Activated CD8-positive, alpha-beta T cell treated with anti-CD3 and anti-CD28 coated beads, Interleukin-2, amount 10 ng/mL, durations not matched to agents 7 days and 5 days (primary cell): ENCODE measurements at regions of chr4 and their contacts with region 1.

Region 1: GRCh38 chr4:22676068-22676467 is 16.7 kb upstream of the GBA3 start:
- DNase-seq: no peak
- ATAC-seq: no peak
- H3K4me3 Mint-ChIP-seq: no peak overlapping the region
- H3K27ac Mint-ChIP-seq: no peak overlapping the region
- H3K4me1 Mint-ChIP-seq: peaks cover 34% of the 10 kb centered on the region
- H3K27me3 Mint-ChIP-seq: no peaks in the 10 kb centered on the region

Region 2: GRCh38 chr4:22515145-22515887 is 160.8 kb before region 1 on chr4:
- CTCF ChIA-PET with region 1: no interaction called
- POLR2A ChIA-PET with region 1: no interaction called
- DNase-seq: peak; percentile 39
- ATAC-seq: peak; percentile 86
- H3K4me3 Mint-ChIP-seq: peak overlapping the region; percentile 96
- H3K27ac Mint-ChIP-seq: peak overlapping the region; percentile 83
- H3K4me1 Mint-ChIP-seq: peaks cover 19% of the 10 kb centered on the region
- H3K27me3 Mint-ChIP-seq: peaks cover 6% of the 10 kb centered on the region

Region 3: GRCh38 chr4:22587253-22587652 is 88.8 kb before region 1 on chr4:
- CTCF ChIA-PET with region 1: no interaction called
- POLR2A ChIA-PET with region 1: no interaction called
- DNase-seq: no peak
- ATAC-seq: peak; percentile 27
- H3K4me3 Mint-ChIP-seq: no peak overlapping the region
- H3K27ac Mint-ChIP-seq: no peak overlapping the region
- H3K4me1 Mint-ChIP-seq: no peaks in the 10 kb centered on the region
- H3K27me3 Mint-ChIP-seq: no peaks in the 10 kb centered on the region

Region 4: DNA sequence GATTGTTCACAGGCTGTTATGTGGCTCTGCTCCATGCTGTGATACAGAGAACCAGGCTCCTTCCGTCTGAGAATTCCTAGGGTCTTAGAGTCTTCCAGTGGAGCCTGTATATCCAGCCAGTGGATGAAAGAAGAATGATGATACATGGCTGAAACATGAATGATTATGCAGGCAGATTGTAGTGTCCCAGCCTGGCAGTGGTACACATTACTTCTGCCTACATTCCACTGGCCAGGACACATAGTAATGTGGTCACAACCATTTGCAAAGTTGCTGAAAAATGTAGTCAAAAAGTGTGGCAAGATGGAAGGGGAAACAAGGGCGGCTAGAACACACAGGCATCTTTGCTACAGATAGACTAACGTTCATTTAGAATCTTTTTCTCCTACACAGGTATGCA is 12.2 kb after region 1 on chr4:
- CTCF ChIA-PET with region 1: interaction called, 10 read pairs
- POLR2A ChIA-PET with region 1: interaction called, 5 read pairs
- DNase-seq: no peak
- ATAC-seq: no peak
- H3K4me3 Mint-ChIP-seq: no peak overlapping the region
- H3K27ac Mint-ChIP-seq: no peak overlapping the region
- H3K4me1 Mint-ChIP-seq: no peaks in the 10 kb centered on the region
- H3K27me3 Mint-ChIP-seq: no peaks in the 10 kb centered on the region